ENCODE measurements at regions of chr5 and their contacts with region 1.

Region 1: DNA sequence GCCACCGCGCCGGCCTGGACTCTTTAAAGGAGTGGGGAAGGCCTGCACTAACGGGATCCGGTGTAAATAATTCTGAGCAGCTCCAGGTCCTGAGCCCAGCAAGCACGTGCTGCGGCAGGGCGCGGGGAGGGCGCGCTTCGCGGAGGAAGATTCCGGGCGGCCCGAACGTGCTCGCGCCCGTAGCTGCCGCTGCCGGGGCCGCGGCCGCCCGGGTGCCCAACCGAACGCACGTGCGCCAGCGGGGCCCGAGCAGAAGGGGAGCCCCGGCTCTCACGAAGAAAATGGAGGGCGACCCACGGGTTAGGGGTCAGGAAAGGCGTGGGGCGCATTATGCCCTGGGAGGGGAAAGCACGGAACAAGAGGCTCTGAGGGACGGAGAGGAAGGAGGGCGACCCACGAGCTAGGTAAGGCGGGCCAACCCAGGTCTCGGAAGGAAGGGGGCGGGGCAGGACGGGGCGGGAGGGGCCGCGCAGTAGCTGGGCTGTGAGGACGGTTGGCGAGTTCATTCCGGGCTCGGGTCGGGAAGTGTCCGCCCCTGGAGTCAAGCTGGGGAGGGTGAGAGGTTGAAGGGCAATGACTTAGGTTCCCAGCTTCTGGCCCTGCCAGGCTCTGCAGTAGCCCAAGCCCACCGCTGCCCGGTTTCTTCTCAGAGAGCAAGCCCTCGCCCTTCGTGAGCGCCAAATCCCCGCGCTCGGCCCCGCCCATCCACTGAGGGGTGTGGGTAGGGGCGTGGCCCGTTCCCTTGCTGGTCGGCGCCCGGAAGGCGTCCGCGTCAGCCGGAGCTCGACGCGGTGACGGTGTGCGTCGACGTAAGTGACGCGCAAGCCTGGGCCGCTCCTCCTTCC is at the start of gene ZNF131:
- DNase-seq: peak; percentile 91
- ATAC-seq: peak; percentile 91
- H3K4me3 Mint-ChIP-seq: peak within 1 kb of the TSS; percentile 98
- H3K27ac Mint-ChIP-seq: peak within 1 kb of the TSS; percentile 97
- H3K4me1 Mint-ChIP-seq: peaks cover 13% of the 10 kb centered on the region
- H3K27me3 Mint-ChIP-seq: no peaks in the 10 kb centered on the region
- CTCF ChIP-seq: no peak
- total RNA-seq, gene ZNF131: 34.7 to 37.2 TPM (median 36.0 TPM) in 3 replicates

Region 2: GRCh38 chr5:43066799-43067741 is 53.9 kb before region 1 on chr5:
- CTCF ChIA-PET with region 1: interaction called, 9 read pairs
- POLR2A ChIA-PET with region 1: interaction called, 14 read pairs
- DNase-seq: peak; percentile 82
- ATAC-seq: peak; percentile 62
- H3K4me3 Mint-ChIP-seq: peak overlapping the region; percentile 87
- H3K27ac Mint-ChIP-seq: peak overlapping the region; percentile 97
- H3K4me1 Mint-ChIP-seq: peaks cover 29% of the 10 kb centered on the region
- H3K27me3 Mint-ChIP-seq: no peaks in the 10 kb centered on the region
- CTCF ChIP-seq: no peak

Region 3: GRCh38 chr5:43105369-43106289 is 15.3 kb before region 1 on chr5:
- CTCF ChIA-PET with region 1: interaction called, 20 read pairs
- POLR2A ChIA-PET with region 1: interaction called, 5 read pairs
- DNase-seq: peak; percentile 91
- ATAC-seq: peak; percentile 97
- H3K4me3 Mint-ChIP-seq: peak overlapping the region; percentile 45
- H3K27ac Mint-ChIP-seq: no peak overlapping the region
- H3K4me1 Mint-ChIP-seq: peaks cover 10% of the 10 kb centered on the region
- H3K27me3 Mint-ChIP-seq: peaks cover 1% of the 10 kb centered on the region; the same call in 1 of the 2 replicates
- CTCF ChIP-seq: peak; percentile 94

Region 4: DNA sequence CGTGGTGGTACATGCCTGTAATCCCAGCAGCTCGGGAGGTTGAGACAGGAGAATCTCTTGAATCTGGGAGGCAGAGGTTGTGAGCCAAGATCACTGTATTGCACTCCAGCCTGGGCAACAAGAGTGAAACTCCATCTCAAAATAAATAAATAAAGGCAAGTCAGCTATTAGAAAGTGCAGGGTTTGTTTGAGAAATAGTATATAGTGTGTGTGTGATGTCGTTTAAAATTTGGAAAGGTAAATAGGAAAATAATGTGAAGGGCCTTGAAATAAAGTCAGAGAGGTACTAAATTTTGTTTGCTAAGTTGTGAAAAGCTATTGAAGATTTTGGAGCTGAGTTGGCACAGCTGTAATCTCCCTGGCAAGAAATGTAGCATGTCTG is 17.6 kb after region 1 on chr5:
- CTCF ChIA-PET with region 1: no interaction called
- POLR2A ChIA-PET with region 1: no interaction called
- DNase-seq: no peak
- ATAC-seq: no peak
- H3K4me3 Mint-ChIP-seq: no peak overlapping the region
- H3K27ac Mint-ChIP-seq: peak overlapping the region; percentile 57; the same call in 1 of the 2 replicates
- H3K4me1 Mint-ChIP-seq: no peaks in the 10 kb centered on the region
- H3K27me3 Mint-ChIP-seq: no peaks in the 10 kb centered on the region
- CTCF ChIP-seq: no peak

Region 5: DNA sequence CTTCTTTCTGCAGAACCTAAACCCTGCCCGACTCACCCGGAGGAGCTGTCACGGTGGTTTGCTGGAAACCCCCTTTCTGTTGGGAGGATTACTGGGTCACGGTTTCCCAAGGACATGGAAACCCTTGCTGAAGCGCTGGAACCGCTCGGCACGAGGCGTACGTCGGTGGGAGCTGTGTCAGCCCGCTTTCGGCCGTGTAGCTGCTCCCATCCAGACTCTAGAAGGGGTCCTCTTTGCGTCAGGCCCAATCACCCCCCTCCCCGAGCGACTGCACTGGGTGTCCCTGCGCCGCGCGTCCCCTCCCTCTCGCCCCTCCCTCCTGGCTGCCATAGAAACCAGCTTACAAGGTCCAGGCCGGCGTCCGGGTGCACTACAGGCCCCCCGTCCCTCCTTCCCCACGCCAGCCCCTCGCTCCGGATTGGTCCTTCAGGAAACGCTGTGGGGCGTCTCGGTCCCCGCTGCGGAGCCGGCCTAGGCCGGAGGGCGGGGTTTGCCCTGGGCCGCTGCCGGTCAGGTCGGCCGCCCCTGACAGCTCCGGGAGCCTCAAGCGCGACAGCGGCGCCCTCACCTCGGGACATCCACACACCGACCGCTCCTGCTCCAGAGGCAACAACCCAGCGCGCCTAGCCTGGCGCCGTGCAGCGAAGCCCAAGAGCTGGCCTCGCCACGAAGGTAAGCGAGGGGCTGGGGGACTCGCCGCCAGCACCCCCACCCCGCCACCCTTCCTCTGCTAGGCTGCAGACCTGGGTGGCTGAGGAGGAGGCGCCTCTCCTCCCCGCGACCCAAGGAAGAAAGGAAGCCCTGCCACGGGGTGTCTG is 71.0 kb after region 1 on chr5 and contains the start of gene NIM1K:
- CTCF ChIA-PET with region 1: interaction called, 15 read pairs
- POLR2A ChIA-PET with region 1: interaction called, 5 read pairs
- DNase-seq: peak; percentile 75
- ATAC-seq: peak; percentile 73
- H3K4me3 Mint-ChIP-seq: peak within 1 kb of the TSS; percentile 79
- H3K27ac Mint-ChIP-seq: no peak within 1 kb of the TSS
- H3K4me1 Mint-ChIP-seq: peaks cover 27% of the 10 kb centered on the region
- H3K27me3 Mint-ChIP-seq: peaks cover 54% of the 10 kb centered on the region
- CTCF ChIP-seq: no peak
- total RNA-seq, gene NIM1K: 0.07 to 0.14 TPM in 2 of 3 replicates, not detected in the other

Region 6: GRCh38 chr5:43256261-43256966 is 135.5 kb after region 1 on chr5:
- CTCF ChIA-PET with region 1: no interaction called
- POLR2A ChIA-PET with region 1: no interaction called
- DNase-seq: no peak
- ATAC-seq: no peak
- H3K4me3 Mint-ChIP-seq: no peak overlapping the region
- H3K27ac Mint-ChIP-seq: no peak overlapping the region
- H3K4me1 Mint-ChIP-seq: no peaks in the 10 kb centered on the region
- H3K27me3 Mint-ChIP-seq: no peaks in the 10 kb centered on the region
- CTCF ChIP-seq: no peak

Region 7: DNA sequence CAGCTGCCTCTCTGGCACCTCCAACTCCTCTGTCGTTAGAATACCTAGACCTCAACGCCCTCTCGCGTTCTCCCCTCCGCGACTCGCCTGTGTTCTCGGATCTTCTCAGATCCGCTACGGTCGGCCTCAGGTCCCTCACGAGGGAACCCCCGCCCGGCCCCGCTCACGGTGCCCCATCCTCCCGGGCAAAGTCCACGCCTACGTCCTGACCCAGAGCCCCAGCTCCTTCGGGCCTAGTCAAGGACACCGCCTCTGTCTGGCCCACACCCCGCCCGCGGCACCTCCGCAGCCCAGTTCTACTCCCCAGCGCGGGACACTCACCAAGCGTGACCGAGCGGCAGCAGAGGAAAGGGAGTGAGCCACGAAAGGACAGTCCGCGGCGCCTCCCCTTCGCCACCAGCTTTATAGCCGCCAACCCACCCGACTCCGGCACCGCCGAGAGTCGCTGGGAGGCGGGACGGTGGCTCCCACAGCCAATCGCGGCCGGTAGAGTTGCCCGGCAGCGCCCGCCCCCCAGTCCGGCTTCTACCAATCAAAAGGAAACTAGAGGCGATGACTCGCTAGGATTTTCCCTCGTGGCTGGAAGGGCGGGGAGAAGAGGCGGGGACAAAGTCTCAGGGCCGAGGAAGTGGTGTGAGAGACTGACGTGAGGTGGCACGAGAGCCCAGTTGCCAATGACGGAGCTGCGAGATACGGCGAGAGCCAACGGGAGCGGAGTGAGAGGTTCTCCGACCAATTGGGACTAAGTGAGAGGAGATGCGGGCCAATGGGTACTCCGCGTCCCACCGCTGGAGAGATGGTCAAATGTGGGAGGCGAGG is 192.3 kb after region 1 on chr5 and contains the start of gene HMGCS1:
- CTCF ChIA-PET with region 1: interaction called, 11 read pairs
- POLR2A ChIA-PET with region 1: interaction called, 15 read pairs
- DNase-seq: peak; percentile 98
- ATAC-seq: peak; percentile 97
- H3K4me3 Mint-ChIP-seq: peak within 1 kb of the TSS; percentile 94
- H3K27ac Mint-ChIP-seq: peak within 1 kb of the TSS; percentile 99
- H3K4me1 Mint-ChIP-seq: peaks cover 52% of the 10 kb centered on the region
- H3K27me3 Mint-ChIP-seq: peaks cover 3% of the 10 kb centered on the region; the same call in 1 of the 2 replicates
- CTCF ChIP-seq: no peak
- total RNA-seq, gene HMGCS1: 176 to 199 TPM (median 178 TPM) in 3 replicates

Region 8: DNA sequence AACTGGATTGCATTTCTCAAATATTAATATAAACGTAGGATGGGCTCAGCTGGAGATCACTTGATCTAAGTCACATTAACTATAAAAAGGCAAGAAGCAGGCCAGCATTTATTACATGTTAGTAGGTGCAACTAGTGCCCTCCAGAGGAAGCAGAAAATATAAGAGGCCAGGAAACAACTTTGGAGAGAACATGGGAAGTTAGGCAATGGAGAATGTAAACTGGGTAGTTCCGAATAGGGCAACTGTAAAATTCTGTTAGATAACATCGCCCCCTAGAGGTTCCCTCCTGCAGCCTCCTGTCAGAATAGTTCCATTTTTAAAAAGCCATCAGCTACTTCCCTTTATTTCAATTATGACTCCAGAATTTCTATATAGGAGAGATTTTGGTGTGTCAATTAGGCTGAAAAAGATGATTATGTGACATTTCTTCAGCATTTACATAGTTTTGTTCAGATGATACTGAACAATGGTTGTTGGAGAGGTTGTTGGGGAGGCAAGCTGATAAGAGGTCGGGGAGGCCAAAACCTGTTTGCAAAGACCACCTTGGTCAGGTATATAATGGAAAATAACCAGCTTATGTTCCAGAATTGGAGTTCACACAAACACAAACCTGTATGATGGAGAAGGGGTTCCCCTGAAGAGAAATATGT is 268.9 kb after region 1 on chr5:
- CTCF ChIA-PET with region 1: interaction called, 10 read pairs
- POLR2A ChIA-PET with region 1: no interaction called
- DNase-seq: peak; percentile 39
- ATAC-seq: peak; percentile 98
- H3K4me3 Mint-ChIP-seq: no peak overlapping the region
- H3K27ac Mint-ChIP-seq: no peak overlapping the region
- H3K4me1 Mint-ChIP-seq: no peaks in the 10 kb centered on the region
- H3K27me3 Mint-ChIP-seq: no peaks in the 10 kb centered on the region; the same call in 1 of the 2 replicates
- CTCF ChIP-seq: peak; percentile 72

Region 9: GRCh38 chr5:43484106-43484849 is 363.3 kb after region 1 on chr5:
- CTCF ChIA-PET with region 1: interaction called, 14 read pairs
- POLR2A ChIA-PET with region 1: interaction called, 17 read pairs
- DNase-seq: peak; percentile 82
- ATAC-seq: peak; percentile 73
- H3K4me3 Mint-ChIP-seq: peak overlapping the region; percentile 98
- H3K27ac Mint-ChIP-seq: peak overlapping the region; percentile 100
- H3K4me1 Mint-ChIP-seq: peaks cover 9% of the 10 kb centered on the region
- H3K27me3 Mint-ChIP-seq: no peaks in the 10 kb centered on the region
- CTCF ChIP-seq: peak; percentile 15; the same call in 1 of the 2 replicates

Measured in WTC11 (cell line).